Spleen (tissue), 13 donors: ENCODE measurements at regions of chr18 and their contacts with region 1.

Region 1: DNA sequence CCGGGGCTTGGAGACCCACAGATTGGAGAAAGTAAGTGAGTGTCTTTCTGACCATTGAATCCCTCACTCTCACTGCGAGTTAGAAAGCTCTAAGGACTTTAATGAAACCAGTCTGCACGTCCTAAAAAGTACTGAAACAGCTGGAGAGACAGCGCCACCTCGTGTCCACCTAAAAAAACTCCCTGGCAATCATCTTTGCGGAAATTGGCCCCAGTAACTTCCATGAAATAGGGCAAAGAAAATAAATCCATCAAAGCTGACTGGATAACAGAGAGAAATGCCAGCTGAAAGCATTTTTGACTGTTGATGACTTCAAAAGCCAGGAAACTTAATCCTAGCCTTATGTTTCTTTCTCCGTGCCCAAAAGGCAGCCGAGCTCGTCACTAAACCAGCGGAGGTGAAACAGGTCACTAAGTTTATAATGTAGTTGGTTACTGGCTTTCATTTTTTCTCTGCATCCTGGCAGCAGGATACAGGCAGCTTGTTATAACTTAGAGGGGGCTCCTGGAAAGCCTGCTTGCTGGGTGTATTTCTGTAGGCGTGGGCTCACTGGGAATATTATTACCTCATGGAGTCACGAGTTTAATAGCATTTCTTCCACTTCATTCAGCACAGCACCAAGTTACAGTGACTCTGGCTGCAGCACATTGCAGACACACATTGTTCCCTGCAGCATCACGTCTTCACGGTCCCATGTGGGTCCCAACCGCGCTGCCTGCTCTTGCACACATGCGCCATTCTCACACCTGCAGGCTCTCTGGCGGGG is 266.5 kb downstream of the HRH4 start:
- DNase-seq: no peak
- H3K4me3 ChIP-seq: no peak overlapping the region
- H3K27ac ChIP-seq: no peak overlapping the region
- H3K4me1 ChIP-seq: peaks cover 0 to 7% (median 0%) of the 10 kb centered on the region in 6 donors
- H3K27me3 ChIP-seq: peaks cover 0 to 18% (median 3%) of the 10 kb centered on the region in 7 donors
- CTCF ChIP-seq: peak; percentile 31 to 80 (median 71)
- POLR2A ChIP-seq: no peak

Region 2: GRCh38 chr18:24354286-24354685 is 372.6 kb before region 1 on chr18:
- intact Hi-C with region 1: loop called (anchors 10 kb)
- DNase-seq: no peak
- H3K4me3 ChIP-seq: no peak overlapping the region
- H3K27ac ChIP-seq: no peak overlapping the region
- H3K4me1 ChIP-seq: no peaks in the 10 kb centered on the region
- H3K27me3 ChIP-seq: no peaks in the 10 kb centered on the region
- CTCF ChIP-seq: no peak
- POLR2A ChIP-seq: no peak

Region 3: DNA sequence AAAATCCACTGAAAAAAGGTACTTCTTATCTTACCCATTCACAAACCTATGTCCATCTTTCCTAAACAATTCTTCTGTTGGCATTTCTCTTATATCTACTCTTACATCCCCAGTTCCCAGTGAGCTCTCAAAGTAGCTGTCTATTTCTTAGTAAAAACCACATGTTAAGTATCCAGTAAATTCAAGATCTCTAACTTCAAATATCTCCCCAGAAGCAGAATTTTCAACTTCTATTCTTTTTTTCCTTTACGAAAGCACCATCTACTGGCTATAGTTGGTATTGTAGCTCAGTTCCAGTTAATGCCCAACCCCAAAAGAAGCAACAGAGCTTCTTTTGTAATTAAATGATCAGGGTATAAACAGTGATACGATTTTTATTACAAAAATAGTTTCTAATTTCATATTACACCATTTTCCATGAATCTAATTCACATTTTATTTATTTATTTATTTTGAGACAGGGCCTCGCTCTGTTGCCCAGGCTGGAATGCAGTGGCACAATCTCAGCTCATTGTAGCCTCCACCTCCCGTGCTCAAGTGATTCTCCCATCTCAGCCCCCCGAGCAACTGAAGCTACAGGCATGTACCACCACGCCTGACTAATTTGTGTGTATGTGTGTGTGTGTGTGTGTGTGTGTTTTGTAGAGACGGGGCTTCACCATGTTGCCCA is 238.0 kb before region 1 on chr18:
- intact Hi-C with region 1: loop called (anchors 5 kb)
- DNase-seq: no peak
- H3K4me3 ChIP-seq: no peak overlapping the region
- H3K27ac ChIP-seq: no peak overlapping the region
- H3K4me1 ChIP-seq: peaks cover 3 to 47% (median 25%) of the 10 kb centered on the region in 6 donors
- H3K27me3 ChIP-seq: no peaks in the 10 kb centered on the region
- CTCF ChIP-seq: peak; percentile 67 to 91 (median 83)
- POLR2A ChIP-seq: no peak